Naive thymus-derived CD4-positive, alpha-beta T cell (primary cell): ENCODE measurements at regions of chr5 and their contacts with region 1.

Region 1: DNA sequence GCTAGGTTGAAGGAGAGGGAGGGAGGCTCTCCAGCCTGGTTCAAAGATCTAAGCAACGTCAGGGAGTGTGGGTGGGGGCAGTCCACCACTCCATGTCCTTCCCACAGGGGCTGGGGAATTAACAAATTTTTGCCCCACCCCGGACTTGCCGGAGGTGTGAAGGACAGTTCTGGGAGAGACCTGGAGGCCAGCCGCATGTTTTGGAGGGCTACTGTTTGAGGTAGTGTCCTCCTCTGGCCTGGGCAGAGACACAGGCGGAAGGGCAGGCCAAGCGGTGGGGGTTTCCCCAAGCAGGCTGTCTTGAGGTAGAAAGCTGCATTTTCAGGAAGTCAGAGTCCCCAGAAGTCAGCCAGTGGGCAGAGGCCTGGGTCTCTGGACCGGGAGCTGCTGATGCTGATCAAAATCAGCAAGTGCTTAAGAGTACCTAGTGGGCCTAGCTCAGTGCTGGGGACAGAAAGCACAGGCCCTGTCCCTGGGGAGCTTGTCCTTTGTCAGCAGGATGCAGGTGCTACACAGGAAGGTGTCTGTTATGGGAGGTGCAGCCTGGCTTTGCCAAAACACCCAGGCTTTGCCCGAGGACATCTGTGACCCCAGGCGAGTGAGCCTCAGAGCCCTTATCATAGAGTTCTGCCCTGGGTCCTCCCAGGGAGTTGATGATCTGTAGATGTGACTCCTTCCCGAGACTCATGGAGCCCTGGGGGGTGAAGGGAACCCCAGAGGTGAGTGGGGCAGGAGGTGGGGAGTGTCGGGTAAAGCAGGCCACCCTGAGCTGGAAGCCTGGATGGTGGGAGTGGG is 18.5 kb downstream of the JADE2 start:
- DNase-seq: peak in 2 of 9 donors; percentile 12 to 61
- ATAC-seq: peak; percentile 80
- H3K4me3 ChIP-seq: no peak overlapping the region
- H3K4me3 Mint-ChIP-seq: peak overlapping the region; percentile 19 to 80 (median 70)
- H3K27ac ChIP-seq: peak overlapping the region; percentile 62
- H3K27ac Mint-ChIP-seq: peak overlapping the region; percentile 73 to 93 (median 86)
- H3K4me1 ChIP-seq: peaks cover 30 to 38% of the 10 kb centered on the region in 2 donors
- H3K4me1 Mint-ChIP-seq: peaks cover 26 to 68% (median 53%) of the 10 kb centered on the region in 7 donors
- H3K27me3 ChIP-seq: no peaks in the 10 kb centered on the region
- H3K27me3 Mint-ChIP-seq: no peaks in the 10 kb centered on the region

Region 2: GRCh38 chr5:134555890-134556311 is 11.9 kb after region 1 on chr5:
- CTCF ChIA-PET with region 1: no interaction called
- POLR2A ChIA-PET with region 1: interaction called, 5 read pairs
- intact Hi-C with region 1: loop called in 1 of 2 experiments (anchors 1 kb)
- DNase-seq: peak; percentile 43 to 88 (median 59)
- ATAC-seq: peak; percentile 94
- H3K4me3 ChIP-seq: no peak overlapping the region
- H3K4me3 Mint-ChIP-seq: peak overlapping the region; percentile 25 to 73 (median 56)
- H3K27ac ChIP-seq: peak overlapping the region; percentile 73
- H3K27ac Mint-ChIP-seq: peak overlapping the region; percentile 76 to 95 (median 89)
- H3K4me1 ChIP-seq: peaks cover 21 to 32% of the 10 kb centered on the region in 2 donors
- H3K4me1 Mint-ChIP-seq: peaks cover 25 to 57% (median 38%) of the 10 kb centered on the region in 7 donors
- H3K27me3 ChIP-seq: no peaks in the 10 kb centered on the region
- H3K27me3 Mint-ChIP-seq: no peaks in the 10 kb centered on the region